MCF 10A (cell line): ENCODE measurements at regions of chr3 and their contacts with region 1.

Region 1: DNA sequence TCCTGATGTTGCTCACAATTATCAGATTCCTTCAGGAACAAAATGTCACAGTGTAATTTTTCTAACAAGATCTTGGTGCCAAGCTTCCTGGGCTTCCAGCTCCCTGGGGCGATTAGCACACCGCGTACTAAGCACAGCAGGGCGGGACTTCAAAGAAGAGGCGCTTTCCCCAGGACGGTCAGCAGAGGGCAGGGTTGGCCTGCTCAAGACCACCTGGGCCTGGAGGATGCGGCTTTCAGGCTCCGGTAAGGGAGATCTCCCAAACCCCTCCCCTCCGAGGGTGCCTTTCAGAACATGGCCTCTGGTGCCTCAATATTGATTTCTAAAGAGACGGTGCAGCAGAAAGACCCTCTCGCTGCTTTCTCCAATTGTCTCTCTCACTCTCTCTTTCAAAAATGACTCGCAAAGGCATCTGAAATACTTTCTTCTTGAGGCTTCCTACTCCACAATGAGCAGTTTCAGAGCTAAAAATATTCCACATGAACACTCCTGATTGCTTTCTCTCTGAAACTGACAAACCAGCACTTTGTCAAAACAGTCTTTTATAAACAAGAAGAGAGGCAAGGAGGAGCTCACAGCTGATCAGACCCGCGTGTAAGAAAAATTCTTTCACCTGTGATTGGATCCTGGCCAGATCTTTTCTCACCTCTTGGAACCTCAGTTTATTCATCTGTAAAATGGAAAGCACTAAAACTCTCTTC is 154.0 kb downstream of the ADAMTS9 start:
- DNase-seq: peak; percentile 87
- H3K4me3 Mint-ChIP-seq: no peak overlapping the region
- H3K27ac Mint-ChIP-seq: no peak overlapping the region
- H3K4me1 Mint-ChIP-seq: peaks cover 15% of the 10 kb centered on the region
- H3K27me3 Mint-ChIP-seq: no peaks in the 10 kb centered on the region
- CTCF ChIP-seq: peak; percentile 93

Region 2: GRCh38 chr3:64518950-64519349 is 14.8 kb before region 1 on chr3:
- CTCF ChIA-PET with region 1: interaction called, 19 read pairs
- POLR2A ChIA-PET with region 1: interaction called, 4 read pairs
- intact Hi-C with region 1: no loop called
- DNase-seq: no peak
- H3K4me3 Mint-ChIP-seq: no peak overlapping the region
- H3K27ac Mint-ChIP-seq: no peak overlapping the region
- H3K4me1 Mint-ChIP-seq: peaks cover 19% of the 10 kb centered on the region
- H3K27me3 Mint-ChIP-seq: no peaks in the 10 kb centered on the region
- CTCF ChIP-seq: no peak

Region 3: DNA sequence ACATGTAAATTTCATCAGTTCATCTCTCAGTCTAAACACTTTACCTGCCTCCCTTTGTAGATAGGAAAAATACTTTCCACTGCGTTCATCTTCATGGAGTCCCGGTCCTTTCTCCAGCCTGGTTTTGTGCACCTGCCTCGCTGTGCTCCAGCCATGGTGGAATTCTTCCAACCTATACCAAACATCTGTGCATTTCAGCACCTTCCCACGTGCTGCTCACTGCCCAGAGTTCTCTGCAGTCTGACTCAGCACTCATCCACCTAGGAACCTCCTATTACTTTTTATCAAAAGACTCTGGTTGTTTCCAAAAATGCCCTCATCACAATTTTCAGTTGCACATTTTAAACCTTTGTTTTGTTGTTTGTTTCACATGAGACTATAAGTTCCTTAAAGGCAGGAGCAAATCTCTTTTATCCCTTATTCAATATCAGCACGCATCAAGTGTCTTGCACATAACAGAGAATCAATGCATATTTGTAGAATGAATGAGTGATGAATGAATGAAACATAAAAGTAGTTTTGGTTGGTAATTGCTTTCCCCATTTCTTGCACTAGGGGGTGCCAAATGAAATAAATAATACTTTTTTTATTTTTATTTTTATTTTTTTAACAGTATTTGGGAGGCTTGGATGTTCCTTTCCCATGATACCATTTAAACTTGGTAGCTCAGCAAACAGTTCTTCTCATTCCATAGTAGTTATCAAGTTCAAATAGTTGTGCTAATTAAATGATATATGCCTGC is 184.3 kb after region 1 on chr3:
- CTCF ChIA-PET with region 1: interaction called, 16 read pairs
- POLR2A ChIA-PET with region 1: interaction called, 3 read pairs
- intact Hi-C with region 1: loop called (anchors 10 kb)
- DNase-seq: peak; percentile 5
- H3K4me3 Mint-ChIP-seq: no peak overlapping the region
- H3K27ac Mint-ChIP-seq: no peak overlapping the region
- H3K4me1 Mint-ChIP-seq: no peaks in the 10 kb centered on the region
- H3K27me3 Mint-ChIP-seq: no peaks in the 10 kb centered on the region
- CTCF ChIP-seq: peak; percentile 69

Region 4: DNA sequence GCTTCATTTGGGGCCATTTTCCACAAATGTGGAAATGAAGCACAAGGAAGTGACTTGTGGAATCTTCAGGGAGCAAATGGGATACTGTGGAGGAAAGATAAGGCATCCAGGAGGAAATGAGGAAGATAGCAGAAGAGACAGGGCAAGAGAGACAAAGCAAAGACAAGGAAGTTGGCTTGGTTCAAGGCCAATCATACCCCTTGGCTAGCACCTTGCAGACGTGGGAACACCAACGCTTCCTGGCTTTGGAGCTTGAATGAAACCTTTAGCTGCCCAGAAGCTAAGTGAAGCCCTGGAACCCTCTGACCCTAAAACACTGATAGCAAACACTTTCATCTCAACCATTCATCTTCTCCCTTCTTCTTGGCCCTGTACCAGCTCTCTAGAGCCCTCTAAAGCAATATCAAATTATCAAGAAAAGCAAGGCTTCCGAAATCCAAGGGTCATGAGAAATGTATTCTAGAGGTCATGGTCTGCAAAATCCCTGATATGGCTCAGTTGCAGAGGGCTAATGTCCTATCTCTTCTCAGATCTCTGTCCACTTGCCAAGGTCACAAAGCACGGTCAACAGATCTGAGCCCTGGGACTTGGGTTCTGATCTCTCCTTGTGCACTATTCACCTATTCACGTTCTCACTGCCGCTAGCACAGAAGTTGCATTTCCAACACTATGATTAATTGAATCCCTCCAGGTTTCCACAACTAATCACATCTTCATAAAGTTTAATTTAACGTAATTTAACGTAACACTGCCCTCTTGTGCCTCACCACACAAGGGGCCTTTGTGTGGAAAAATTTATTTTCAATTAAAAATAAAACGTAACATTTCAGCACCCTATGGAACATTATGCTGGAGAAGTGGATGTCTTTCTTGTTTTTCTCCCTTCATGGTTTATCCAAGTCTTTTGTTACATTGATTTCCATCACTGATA is 711.6 kb after region 1 on chr3:
- CTCF ChIA-PET with region 1: interaction called, 135 read pairs
- POLR2A ChIA-PET with region 1: no interaction called
- intact Hi-C with region 1: loop called (anchors 1 kb)
- DNase-seq: peak; percentile 14
- H3K4me3 Mint-ChIP-seq: no peak overlapping the region
- H3K27ac Mint-ChIP-seq: no peak overlapping the region
- H3K4me1 Mint-ChIP-seq: no peaks in the 10 kb centered on the region
- H3K27me3 Mint-ChIP-seq: no peaks in the 10 kb centered on the region
- CTCF ChIP-seq: peak; percentile 53

Region 5: GRCh38 chr3:65439641-65440284 is 906.0 kb after region 1 on chr3:
- CTCF ChIA-PET with region 1: interaction called, 30 read pairs
- POLR2A ChIA-PET with region 1: no interaction called
- intact Hi-C with region 1: loop called (anchors 1 kb)
- DNase-seq: peak; percentile 66
- H3K4me3 Mint-ChIP-seq: no peak overlapping the region
- H3K27ac Mint-ChIP-seq: no peak overlapping the region
- H3K4me1 Mint-ChIP-seq: no peaks in the 10 kb centered on the region
- H3K27me3 Mint-ChIP-seq: no peaks in the 10 kb centered on the region
- CTCF ChIP-seq: peak; percentile 45

Region 6: GRCh38 chr3:65751123-65751700 is 1217.4 kb after region 1 on chr3:
- CTCF ChIA-PET with region 1: interaction called, 17 read pairs
- POLR2A ChIA-PET with region 1: no interaction called
- intact Hi-C with region 1: loop called (anchors 1 kb)
- DNase-seq: peak; percentile 58
- H3K4me3 Mint-ChIP-seq: no peak overlapping the region
- H3K27ac Mint-ChIP-seq: no peak overlapping the region
- H3K4me1 Mint-ChIP-seq: no peaks in the 10 kb centered on the region
- H3K27me3 Mint-ChIP-seq: no peaks in the 10 kb centered on the region
- CTCF ChIP-seq: peak; percentile 63